Naive thymus-derived CD4-positive, alpha-beta T cell (primary cell): ENCODE measurements at regions of chr18 and their contacts with region 1.

Region 1: GRCh38 chr18:63320046-63320689 is 599 bp upstream of the BCL2 start:
- DNase-seq: peak; percentile 71 to 93 (median 90)
- ATAC-seq: peak; percentile 89
- H3K4me3 ChIP-seq: peak overlapping the region; percentile 61
- H3K4me3 Mint-ChIP-seq: peak overlapping the region; percentile 86 to 99 (median 94)
- H3K27ac ChIP-seq: peak overlapping the region; percentile 94
- H3K27ac Mint-ChIP-seq: peak overlapping the region; percentile 87 to 98 (median 94)
- H3K4me1 ChIP-seq: peaks cover 13 to 15% of the 10 kb centered on the region in 2 donors
- H3K4me1 Mint-ChIP-seq: peaks cover 21 to 45% (median 38%) of the 10 kb centered on the region in 7 donors
- H3K27me3 ChIP-seq: no peaks in the 10 kb centered on the region
- H3K27me3 Mint-ChIP-seq: no peaks in the 10 kb centered on the region

Region 2: DNA sequence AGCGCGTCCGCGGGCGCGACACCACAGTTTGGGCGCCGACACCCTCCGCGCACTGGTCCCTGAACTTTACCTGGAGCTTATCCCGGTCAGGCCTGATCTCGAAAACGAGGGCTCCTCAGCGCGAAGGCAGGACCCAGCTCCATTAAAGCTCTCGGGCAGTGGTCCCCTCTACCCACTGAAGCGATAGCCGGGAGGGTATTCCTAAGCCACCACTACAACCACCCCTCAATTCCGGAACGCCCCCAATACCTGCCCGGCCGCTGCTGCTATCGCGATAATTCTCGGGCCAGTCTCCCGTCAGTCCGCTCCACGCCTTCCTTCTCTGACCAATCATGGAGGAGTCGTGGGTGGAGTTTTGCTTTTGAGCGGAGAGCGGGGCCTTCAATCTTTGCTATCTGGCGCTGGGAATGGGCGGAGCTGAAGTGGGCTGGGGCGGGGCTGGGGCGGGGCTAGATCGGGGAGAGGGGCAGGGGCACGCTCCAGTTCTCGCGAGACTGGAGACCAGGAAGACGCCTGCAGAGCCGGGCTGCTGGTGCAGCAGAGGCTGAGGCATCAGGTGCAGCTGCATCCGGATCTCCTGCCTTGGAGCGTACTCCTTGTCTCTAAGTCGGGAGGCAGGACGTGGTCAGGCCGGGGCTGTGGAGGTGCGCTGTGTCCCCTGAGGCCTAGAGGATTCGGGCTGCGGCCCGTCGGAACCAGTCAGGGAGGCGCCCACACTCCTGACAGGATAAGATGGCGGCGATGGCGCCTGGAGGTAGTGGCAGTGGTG is 1133.2 kb before region 1 on chr18 and contains the starts of genes PIGN and RELCH:
- CTCF ChIA-PET with region 1: no interaction called
- POLR2A ChIA-PET with region 1: no interaction called
- intact Hi-C with region 1: loop called in 1 of 2 experiments (anchors 2 kb)
- DNase-seq: peak; percentile 73 to 98 (median 96)
- ATAC-seq: peak; percentile 97
- H3K4me3 ChIP-seq: peak within 1 kb of the TSS; percentile 97
- H3K4me3 Mint-ChIP-seq: peak within 1 kb of the TSS; percentile 96 to 100 (median 99)
- H3K27ac ChIP-seq: peak within 1 kb of the TSS; percentile 74
- H3K27ac Mint-ChIP-seq: peak within 1 kb of the TSS; percentile 91 to 98 (median 96)
- H3K4me1 ChIP-seq: peaks cover 18 to 21% of the 10 kb centered on the region in 2 donors
- H3K4me1 Mint-ChIP-seq: peaks cover 48 to 76% (median 69%) of the 10 kb centered on the region in 7 donors
- H3K27me3 ChIP-seq: no peaks in the 10 kb centered on the region
- H3K27me3 Mint-ChIP-seq: no peaks in the 10 kb centered on the region
- total RNA-seq, gene PIGN: 18.2 to 29.8 (median 28.2) TPM
- total RNA-seq, gene RELCH: 51.3 to 70.8 (median 62.1) TPM

Region 3: DNA sequence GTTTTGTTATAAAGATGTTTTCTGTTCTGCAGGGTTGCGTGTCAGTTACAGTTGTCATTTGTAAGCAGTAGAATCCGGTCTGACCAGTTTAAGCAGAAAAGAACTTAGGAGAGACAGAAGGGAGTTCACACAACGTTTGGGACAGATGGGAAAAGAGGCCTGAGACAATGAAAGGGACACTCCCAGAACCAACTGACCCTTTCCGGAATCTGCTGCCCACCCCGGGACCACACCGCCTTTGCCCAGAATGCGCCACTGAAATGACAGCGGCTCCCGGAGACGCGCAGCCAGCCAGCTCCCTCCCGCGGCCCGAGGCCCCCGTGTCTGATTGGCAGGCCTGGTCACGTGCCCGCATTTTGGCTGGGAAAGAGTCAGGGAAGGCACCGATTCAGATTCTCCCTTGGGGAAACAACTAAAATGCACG is 245.2 kb before region 1 on chr18:
- CTCF ChIA-PET with region 1: interaction called, 5 read pairs
- POLR2A ChIA-PET with region 1: no interaction called
- intact Hi-C with region 1: loop called in 1 of 2 experiments (anchors 2 kb)
- DNase-seq: peak; percentile 19 to 68 (median 42)
- ATAC-seq: peak; percentile 80
- H3K4me3 ChIP-seq: peak overlapping the region; percentile 66
- H3K4me3 Mint-ChIP-seq: peak overlapping the region; percentile 70 to 95 (median 86)
- H3K27ac ChIP-seq: no peak overlapping the region
- H3K27ac Mint-ChIP-seq: peak overlapping the region in 8 of 9 donors; percentile 0 to 85 (median 65)
- H3K4me1 ChIP-seq: no peaks in the 10 kb centered on the region
- H3K4me1 Mint-ChIP-seq: peaks cover 0 to 13% (median 12%) of the 10 kb centered on the region in 7 donors
- H3K27me3 ChIP-seq: no peaks in the 10 kb centered on the region
- H3K27me3 Mint-ChIP-seq: peaks cover 0 to 23% (median 10%) of the 10 kb centered on the region in 5 donors

Region 4: DNA sequence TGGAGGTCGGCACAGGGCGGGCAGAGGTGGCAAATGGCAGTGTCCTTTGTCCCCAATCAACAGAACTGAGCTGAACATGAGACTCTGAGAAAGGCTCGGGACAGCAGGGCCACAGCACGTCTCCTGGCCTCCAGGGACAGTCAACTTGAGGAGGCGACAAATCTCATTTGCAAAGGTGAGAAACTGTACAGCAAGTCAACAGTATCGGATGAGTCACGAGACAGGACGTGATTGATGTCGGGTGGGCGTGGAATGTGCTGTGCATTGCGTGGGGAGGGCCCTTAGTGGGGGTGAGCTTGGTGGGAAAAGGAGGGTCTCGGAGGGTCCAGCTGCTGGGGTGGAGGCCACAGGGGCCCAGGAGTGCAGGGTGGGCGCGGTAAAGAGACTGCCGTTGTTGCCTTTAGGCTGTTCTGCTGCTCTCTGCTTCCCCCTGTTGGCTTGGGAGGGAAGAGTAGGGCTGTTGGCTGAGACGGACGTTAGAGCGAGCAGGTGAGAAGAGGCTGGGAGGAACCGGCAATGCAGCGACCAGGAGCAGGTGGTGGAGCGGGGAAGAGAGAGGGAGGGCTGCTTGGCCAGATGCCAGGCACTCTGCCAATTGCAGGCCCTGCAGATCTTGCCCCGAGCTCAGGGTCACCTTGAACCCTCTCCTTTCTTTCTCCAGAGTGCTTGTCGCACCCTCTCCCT is 164.9 kb before region 1 on chr18:
- CTCF ChIA-PET with region 1: interaction called, 51 read pairs
- POLR2A ChIA-PET with region 1: interaction called, 75 read pairs
- intact Hi-C with region 1: loop called (anchors 1 kb)
- DNase-seq: peak; percentile 64 to 89 (median 80)
- ATAC-seq: peak; percentile 85
- H3K4me3 ChIP-seq: peak overlapping the region; percentile 56
- H3K4me3 Mint-ChIP-seq: peak overlapping the region; percentile 78 to 99 (median 88)
- H3K27ac ChIP-seq: peak overlapping the region; percentile 90
- H3K27ac Mint-ChIP-seq: peak overlapping the region; percentile 77 to 99 (median 95)
- H3K4me1 ChIP-seq: peaks cover 89 to 92% of the 10 kb centered on the region in 2 donors
- H3K4me1 Mint-ChIP-seq: peaks cover 80 to 100% (median 100%) of the 10 kb centered on the region in 7 donors
- H3K27me3 ChIP-seq: no peaks in the 10 kb centered on the region
- H3K27me3 Mint-ChIP-seq: no peaks in the 10 kb centered on the region

Region 5: DNA sequence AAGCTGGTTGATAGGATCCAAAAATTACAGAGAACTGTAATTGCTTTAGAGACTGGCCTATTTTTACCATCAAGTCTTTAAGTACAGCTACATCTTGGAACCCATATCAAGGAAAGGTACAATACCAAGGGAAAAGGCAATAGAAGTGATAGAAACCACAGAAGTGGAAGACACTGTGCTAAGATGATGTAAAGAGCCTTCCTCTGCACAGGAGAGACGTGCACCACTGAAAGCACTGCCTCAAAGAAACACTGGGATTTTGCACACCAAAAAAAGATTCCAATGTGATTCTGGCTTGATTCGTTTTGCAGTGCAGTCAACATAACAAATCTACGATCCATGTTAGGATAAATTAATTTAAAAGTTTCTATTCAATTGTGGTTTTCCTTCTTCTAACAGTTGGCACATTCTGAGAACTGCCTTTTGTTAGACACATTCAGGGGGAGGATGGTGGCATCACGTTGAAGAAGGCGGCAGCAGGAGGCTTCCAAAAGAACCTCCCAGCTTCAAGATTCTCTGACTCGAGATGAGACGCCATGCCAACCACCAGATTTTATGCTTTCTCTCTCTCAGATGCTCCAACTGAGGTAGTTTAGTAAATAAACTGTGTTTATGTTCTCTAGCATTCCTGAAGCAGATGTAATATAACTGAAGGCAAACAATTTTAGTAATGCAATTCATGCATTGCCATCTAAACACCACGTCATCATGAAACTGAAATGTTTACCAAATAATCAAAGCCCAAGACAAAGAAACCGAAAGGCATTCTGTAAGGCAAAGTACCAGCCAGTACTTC is 103.5 kb before region 1 on chr18:
- CTCF ChIA-PET with region 1: interaction called, 5 read pairs
- POLR2A ChIA-PET with region 1: interaction called, 9 read pairs
- intact Hi-C with region 1: loop called in 1 of 2 experiments (anchors 1 kb)
- DNase-seq: peak in 7 of 9 donors; percentile 34 to 62 (median 49)
- ATAC-seq: peak; percentile 73
- H3K4me3 ChIP-seq: peak overlapping the region; percentile 25
- H3K4me3 Mint-ChIP-seq: peak overlapping the region; percentile 54 to 89 (median 78)
- H3K27ac ChIP-seq: peak overlapping the region; percentile 63
- H3K27ac Mint-ChIP-seq: peak overlapping the region; percentile 70 to 94 (median 90)
- H3K4me1 ChIP-seq: peaks cover 58 to 75% of the 10 kb centered on the region in 2 donors
- H3K4me1 Mint-ChIP-seq: peaks cover 71 to 99% (median 93%) of the 10 kb centered on the region in 7 donors
- H3K27me3 ChIP-seq: no peaks in the 10 kb centered on the region
- H3K27me3 Mint-ChIP-seq: no peaks in the 10 kb centered on the region

Region 6: DNA sequence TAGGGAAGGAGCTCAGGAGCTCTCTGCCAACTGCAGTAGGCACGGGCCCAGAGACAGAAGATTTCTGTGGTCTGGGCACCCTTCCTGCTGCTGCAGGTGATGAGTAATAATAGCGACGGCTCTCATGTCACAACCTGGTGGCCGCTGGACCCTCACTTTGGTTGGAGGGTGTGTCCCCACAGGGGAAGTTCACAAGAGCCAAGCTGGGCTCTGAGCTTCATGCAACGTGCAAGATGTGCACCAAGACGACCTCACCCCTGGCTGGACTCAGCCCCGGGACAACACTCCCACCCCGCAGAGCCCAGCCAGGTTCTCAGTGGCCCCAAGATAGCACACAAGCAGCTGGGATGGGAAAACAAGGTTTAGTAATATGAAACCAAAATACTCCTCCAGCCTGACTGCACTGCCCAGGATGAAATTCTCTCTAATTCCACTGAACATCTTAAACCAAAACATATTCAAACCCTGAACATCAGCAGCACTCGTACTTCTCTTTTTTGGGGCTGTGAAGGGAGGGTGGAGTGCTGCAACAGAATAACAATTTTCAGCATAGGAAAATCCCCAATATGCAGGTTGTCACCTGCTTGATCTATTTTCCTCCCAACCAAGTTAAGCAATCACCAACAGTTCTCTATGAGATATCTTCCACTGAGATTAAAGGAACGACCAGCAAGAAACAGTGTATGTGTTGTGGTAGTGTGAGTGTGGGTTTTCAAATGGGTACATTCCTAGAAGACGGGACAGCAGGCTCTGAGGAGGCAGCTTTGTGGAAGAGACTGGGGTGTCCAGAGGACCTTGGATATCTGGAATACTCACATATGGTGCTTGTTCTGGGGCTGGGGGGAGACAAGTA is 27.1 kb before region 1 on chr18:
- CTCF ChIA-PET with region 1: interaction called, 27 read pairs
- POLR2A ChIA-PET with region 1: interaction called, 14 read pairs
- intact Hi-C with region 1: loop called in 1 of 2 experiments (anchors 1 kb)
- DNase-seq: no peak
- ATAC-seq: peak; percentile 54
- H3K4me3 ChIP-seq: no peak overlapping the region
- H3K4me3 Mint-ChIP-seq: peak overlapping the region in 7 of 10 donors; percentile 7 to 69 (median 50)
- H3K27ac ChIP-seq: peak overlapping the region; percentile 34
- H3K27ac Mint-ChIP-seq: peak overlapping the region in 6 of 9 donors; percentile 1 to 71 (median 38)
- H3K4me1 ChIP-seq: peaks cover 51 to 55% of the 10 kb centered on the region in 2 donors
- H3K4me1 Mint-ChIP-seq: peaks cover 11 to 65% (median 17%) of the 10 kb centered on the region in 7 donors
- H3K27me3 ChIP-seq: no peaks in the 10 kb centered on the region
- H3K27me3 Mint-ChIP-seq: no peaks in the 10 kb centered on the region

Region 7: DNA sequence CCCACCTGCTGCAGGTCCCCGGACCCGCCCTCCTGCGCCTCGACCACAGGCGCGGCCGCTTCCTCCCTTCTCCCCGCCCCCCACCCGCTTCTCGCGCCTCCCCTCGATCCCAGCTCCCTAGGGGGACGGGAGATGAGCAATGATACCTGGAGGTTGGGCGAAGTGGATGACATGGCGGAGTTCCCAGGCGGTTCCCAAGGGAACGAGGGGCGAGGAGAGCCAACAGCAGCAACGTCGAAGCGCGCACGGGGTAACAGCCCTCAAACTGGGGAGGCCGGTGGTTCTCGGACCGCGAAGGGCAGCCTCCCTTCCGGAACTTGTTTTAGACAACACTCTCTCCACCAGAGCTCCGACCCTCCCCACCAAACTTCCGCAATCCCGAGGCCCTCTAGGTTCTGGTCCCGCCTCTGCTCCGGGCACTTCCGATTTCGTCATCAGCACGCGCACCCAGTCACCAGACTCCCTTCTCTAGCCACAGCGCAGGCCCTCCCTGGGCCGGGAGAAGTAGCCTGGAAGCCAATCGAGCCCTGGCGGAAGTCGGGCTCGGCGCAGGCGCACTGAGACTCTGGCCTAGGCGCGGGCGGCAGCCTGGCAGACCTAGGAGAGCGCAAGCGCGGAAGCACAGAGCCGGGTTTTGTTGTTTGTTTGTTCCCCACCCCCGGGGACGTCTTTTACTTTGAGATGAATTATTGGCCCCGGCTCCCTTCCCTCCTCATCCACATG is 102.1 kb after region 1 on chr18 and contains the start of gene VPS4B:
- CTCF ChIA-PET with region 1: no interaction called
- POLR2A ChIA-PET with region 1: interaction called, 4 read pairs
- intact Hi-C with region 1: loop called (anchors 1 kb)
- DNase-seq: peak; percentile 99 to 100 (median 99)
- ATAC-seq: peak; percentile 97
- H3K4me3 ChIP-seq: peak within 1 kb of the TSS; percentile 96
- H3K4me3 Mint-ChIP-seq: peak within 1 kb of the TSS; percentile 88 to 100 (median 97)
- H3K27ac ChIP-seq: peak within 1 kb of the TSS; percentile 95
- H3K27ac Mint-ChIP-seq: peak within 1 kb of the TSS; percentile 94 to 100 (median 98)
- H3K4me1 ChIP-seq: peaks cover 17 to 22% of the 10 kb centered on the region in 2 donors
- H3K4me1 Mint-ChIP-seq: peaks cover 6 to 34% (median 26%) of the 10 kb centered on the region in 7 donors
- H3K27me3 ChIP-seq: no peaks in the 10 kb centered on the region
- H3K27me3 Mint-ChIP-seq: peaks cover 0 to 5% (median 2%) of the 10 kb centered on the region in 5 donors
- total RNA-seq, gene VPS4B: 48.2 to 84.6 (median 74.9) TPM

Region 8: DNA sequence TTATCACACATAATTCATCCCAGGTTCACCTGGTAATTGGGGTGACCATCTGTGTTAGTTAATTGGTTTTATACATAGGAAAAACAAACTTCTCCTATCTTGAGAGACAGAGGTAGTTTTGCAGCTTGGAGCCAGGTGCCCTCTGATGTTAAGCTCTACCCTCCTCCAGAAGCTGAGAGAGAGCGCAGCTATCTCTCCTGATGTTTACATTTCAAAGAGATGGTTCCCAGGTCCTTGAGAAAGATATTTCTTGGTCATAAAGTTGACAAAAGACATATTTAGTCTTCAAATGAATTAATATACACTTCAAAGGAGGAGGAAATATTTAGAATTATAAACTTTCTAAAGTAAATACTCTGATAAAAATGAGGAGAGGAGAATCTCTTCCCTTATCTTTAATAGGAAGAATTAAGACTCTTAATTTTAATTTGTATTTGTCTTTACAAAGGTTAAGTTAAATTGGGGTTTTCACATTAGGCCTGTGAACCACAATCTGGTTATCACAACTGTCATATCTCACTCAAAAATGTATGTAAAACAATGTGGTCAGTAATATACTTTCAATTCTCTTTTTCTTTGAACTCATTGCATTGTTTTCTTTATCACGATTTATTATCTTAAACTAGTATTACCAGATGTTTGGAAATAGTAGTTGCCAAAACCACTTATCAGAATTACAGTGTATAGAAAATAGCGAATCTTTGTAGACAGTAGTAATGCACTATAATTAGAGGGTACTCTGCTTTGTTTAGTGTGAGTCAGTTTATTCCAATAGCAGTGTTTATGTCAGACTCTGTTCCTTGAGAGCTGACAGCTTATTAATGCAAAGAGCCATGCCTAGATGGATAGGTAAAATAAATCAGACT is 297.1 kb after region 1 on chr18:
- CTCF ChIA-PET with region 1: no interaction called
- POLR2A ChIA-PET with region 1: no interaction called
- intact Hi-C with region 1: no loop called
- DNase-seq: no peak
- ATAC-seq: no peak
- H3K4me3 ChIP-seq: no peak overlapping the region
- H3K4me3 Mint-ChIP-seq: no peak overlapping the region
- H3K27ac ChIP-seq: no peak overlapping the region
- H3K27ac Mint-ChIP-seq: no peak overlapping the region
- H3K4me1 ChIP-seq: no peaks in the 10 kb centered on the region
- H3K4me1 Mint-ChIP-seq: no peaks in the 10 kb centered on the region
- H3K27me3 ChIP-seq: no peaks in the 10 kb centered on the region
- H3K27me3 Mint-ChIP-seq: peaks cover 0 to 22% (median 11%) of the 10 kb centered on the region in 5 donors

Region 9: DNA sequence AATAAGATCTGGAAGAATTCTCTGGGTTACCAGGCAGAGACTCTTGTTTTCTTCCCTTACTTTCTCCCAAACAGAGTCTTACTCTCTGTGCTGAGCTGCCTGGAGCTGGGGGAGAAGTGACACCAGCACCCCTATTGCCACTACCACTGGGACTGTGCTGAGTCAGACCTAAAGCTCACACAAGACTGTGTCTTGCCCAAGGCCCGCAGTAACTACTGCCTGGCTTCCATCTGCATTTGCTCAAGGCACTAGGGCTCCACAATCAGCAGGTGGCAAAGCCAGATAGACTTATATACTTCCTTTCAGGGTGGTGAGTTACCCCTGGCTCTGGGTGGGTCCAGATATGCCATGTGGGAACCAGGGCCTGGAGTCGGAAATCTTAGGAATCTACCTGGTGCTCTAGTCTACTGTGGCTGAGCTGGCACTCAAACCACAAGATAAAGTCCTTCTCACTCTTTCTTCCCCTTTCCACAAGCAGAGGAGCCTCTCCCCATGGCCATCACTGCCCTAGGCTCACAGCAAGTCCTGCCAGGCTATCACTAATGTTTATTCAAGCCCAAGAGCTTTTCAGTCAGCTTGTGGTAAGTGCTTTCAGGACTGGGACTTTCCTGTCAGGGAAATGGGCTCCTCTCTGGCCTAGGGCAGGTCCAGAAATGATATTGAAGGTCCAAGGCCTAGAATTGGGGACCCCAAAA is 539.8 kb after region 1 on chr18:
- CTCF ChIA-PET with region 1: no interaction called
- POLR2A ChIA-PET with region 1: no interaction called
- intact Hi-C with region 1: no loop called
- DNase-seq: no peak
- ATAC-seq: peak; percentile 68
- H3K4me3 ChIP-seq: no peak overlapping the region
- H3K4me3 Mint-ChIP-seq: no peak overlapping the region
- H3K27ac ChIP-seq: no peak overlapping the region
- H3K27ac Mint-ChIP-seq: no peak overlapping the region
- H3K4me1 ChIP-seq: no peaks in the 10 kb centered on the region
- H3K4me1 Mint-ChIP-seq: no peaks in the 10 kb centered on the region
- H3K27me3 ChIP-seq: no peaks in the 10 kb centered on the region
- H3K27me3 Mint-ChIP-seq: peaks cover 9 to 33% (median 13%) of the 10 kb centered on the region in 5 donors